ENCODE measurements at regions of chr7 and their contacts with region 1.

Region 1: GRCh38 chr7:104231054-104232046 is 23.5 kb upstream of the ORC5 start:
- DNase-seq: peak; percentile 79
- H3K4me3 ChIP-seq: no peak overlapping the region; a peak in 2 of 4 replicates
- H3K27ac ChIP-seq: no peak overlapping the region
- H3K4me1 ChIP-seq: peaks cover 0 to 13% of the 10 kb centered on the region in 2 experiments; a peak in 1 of 4 replicates
- H3K27me3 ChIP-seq: peaks cover 13% of the 10 kb centered on the region; the same call in 1 of the 2 replicates
- CTCF ChIP-seq: peak; percentile 94
- EP300 ChIP-seq: no peak
- RAD21 ChIP-seq: peak; percentile 91

Region 2: GRCh38 chr7:103967401-103967800 is 263.9 kb before region 1 on chr7:
- CTCF ChIA-PET with region 1: no interaction called
- POLR2A ChIA-PET with region 1: no interaction called
- DNase-seq: no peak
- H3K4me3 ChIP-seq: no peak overlapping the region
- H3K27ac ChIP-seq: no peak overlapping the region
- H3K4me1 ChIP-seq: no peaks in the 10 kb centered on the region
- H3K27me3 ChIP-seq: no peaks in the 10 kb centered on the region; the same call in 1 of the 2 replicates
- CTCF ChIP-seq: no peak
- EP300 ChIP-seq: no peak
- RAD21 ChIP-seq: no peak

Region 3: GRCh38 chr7:104252404-104253134 is 21.2 kb after region 1 on chr7:
- CTCF ChIA-PET with region 1: interaction called, 29 read pairs
- POLR2A ChIA-PET with region 1: no interaction called
- DNase-seq: no peak
- H3K4me3 ChIP-seq: no peak overlapping the region
- H3K27ac ChIP-seq: no peak overlapping the region
- H3K4me1 ChIP-seq: no peaks in the 10 kb centered on the region
- H3K27me3 ChIP-seq: peaks cover 7% of the 10 kb centered on the region; the same call in 1 of the 2 replicates
- CTCF ChIP-seq: peak; percentile 44
- EP300 ChIP-seq: no peak
- RAD21 ChIP-seq: peak; percentile 21

Region 4: DNA sequence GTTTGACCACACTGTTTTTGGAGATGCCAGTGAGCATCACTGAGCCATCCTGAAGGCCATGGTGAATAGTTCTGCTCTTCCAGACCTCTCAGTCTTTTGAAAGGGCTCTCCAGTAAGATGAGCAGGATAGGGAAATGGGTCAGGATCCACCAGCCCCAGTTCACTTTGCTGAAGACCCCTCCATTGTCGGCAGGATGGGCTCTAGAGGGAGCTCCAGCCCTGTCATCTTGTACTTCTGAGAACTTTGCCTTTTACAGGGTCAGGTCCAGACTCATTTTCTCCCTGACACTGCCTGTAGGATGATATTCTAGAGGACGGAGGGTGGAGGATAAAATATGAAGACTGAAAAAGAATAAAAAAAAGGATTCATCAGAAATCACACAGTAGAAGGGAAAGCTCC is 110.2 kb after region 1 on chr7:
- CTCF ChIA-PET with region 1: interaction called, 13 read pairs
- POLR2A ChIA-PET with region 1: no interaction called
- DNase-seq: peak; percentile 69
- H3K4me3 ChIP-seq: no peak overlapping the region; a peak in 1 of 4 replicates
- H3K27ac ChIP-seq: no peak overlapping the region
- H3K4me1 ChIP-seq: no peaks in the 10 kb centered on the region
- H3K27me3 ChIP-seq: no peaks in the 10 kb centered on the region
- CTCF ChIP-seq: peak; percentile 36
- EP300 ChIP-seq: no peak
- RAD21 ChIP-seq: peak; percentile 83

Region 5: GRCh38 chr7:104862719-104863118 is 631.4 kb after region 1 on chr7:
- CTCF ChIA-PET with region 1: interaction called, 78 read pairs
- POLR2A ChIA-PET with region 1: no interaction called
- DNase-seq: peak; percentile 63
- H3K4me3 ChIP-seq: no peak overlapping the region
- H3K27ac ChIP-seq: no peak overlapping the region
- H3K4me1 ChIP-seq: peaks cover 0 to 4% of the 10 kb centered on the region in 2 experiments; a peak in 1 of 4 replicates
- H3K27me3 ChIP-seq: peaks cover 54% of the 10 kb centered on the region
- CTCF ChIP-seq: peak; percentile 58
- EP300 ChIP-seq: no peak
- RAD21 ChIP-seq: peak; percentile 66

Region 6: DNA sequence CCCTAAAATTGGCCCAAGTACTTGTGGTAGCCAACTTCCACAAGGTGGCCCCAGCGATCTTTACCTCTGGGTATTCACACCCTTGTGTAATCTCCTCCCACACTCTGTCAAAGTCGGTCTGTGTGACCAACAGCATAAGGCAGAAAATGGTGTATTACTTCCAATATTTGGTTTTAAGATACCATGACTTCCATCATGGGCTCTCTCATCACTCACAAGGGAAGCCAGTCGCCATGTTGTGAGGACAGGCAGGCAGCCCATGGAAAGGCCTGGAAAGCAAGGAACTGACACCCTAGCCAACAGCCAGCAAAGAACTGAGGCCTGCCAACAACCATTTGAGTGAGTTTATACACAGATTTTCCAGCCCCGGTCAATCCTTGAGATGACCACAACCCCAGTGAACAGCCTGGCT is 691.7 kb after region 1 on chr7:
- CTCF ChIA-PET with region 1: interaction called, 41 read pairs
- POLR2A ChIA-PET with region 1: no interaction called
- DNase-seq: peak; percentile 74
- H3K4me3 ChIP-seq: no peak overlapping the region; a peak in 1 of 4 replicates
- H3K27ac ChIP-seq: no peak overlapping the region; a peak in 1 of 4 replicates
- H3K4me1 ChIP-seq: no peaks in the 10 kb centered on the region; a peak in 2 of 4 replicates
- H3K27me3 ChIP-seq: no peaks in the 10 kb centered on the region; the same call in 1 of the 2 replicates
- CTCF ChIP-seq: peak; percentile 92
- EP300 ChIP-seq: 0 out of 4 replicates have a peak, but pooled peaks of 1 of the 2 experiments have one; percentile 12
- RAD21 ChIP-seq: peak; percentile 99

Measured in SK-N-SH (cell line).